IMR-90 (cell line): ENCODE measurements at regions of chr6 and their contacts with region 1.

Region 1: DNA sequence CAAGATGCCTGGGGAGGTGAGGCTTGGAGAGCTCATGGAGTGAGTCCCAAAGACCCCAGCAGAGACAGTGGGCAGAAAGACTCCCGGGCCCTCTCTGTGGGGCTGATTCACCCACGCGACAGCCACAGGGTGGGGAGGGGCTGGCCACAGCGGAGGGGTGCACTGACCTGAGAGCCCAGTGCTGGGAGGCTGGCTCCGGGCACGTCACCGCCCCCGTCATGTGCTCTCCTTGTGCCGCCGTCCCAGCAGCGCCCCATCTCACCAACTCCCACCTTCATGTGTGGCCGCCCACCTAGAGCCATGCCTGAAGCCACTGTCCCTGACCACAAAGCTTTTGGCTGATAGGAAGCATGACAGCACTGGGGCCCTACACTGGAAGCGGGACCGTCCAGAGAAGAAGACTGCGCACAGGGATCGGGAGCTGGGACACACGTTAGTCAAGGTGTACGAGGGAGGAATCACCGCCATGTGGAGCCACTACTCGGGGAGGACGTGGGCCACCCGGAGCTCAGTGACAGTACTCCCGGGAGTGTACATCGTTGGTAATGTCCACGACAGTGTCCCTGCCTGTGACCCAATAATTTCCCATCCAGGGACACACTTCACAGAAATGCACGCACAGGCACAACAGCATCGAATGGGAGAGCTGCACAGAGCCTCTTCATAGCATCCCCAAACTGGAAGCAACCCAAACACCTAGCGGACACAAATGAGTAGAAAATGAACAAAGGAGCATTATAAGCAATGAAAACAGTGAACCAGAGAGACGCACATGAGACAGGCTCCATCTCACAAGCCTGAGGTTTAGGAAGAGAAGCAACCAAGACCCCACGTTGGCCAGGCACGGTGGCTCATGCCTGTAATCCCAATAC is 28.4 kb upstream of the FOXC1 start:
- DNase-seq: no peak
- ATAC-seq: no peak
- H3K4me3 ChIP-seq: no peak overlapping the region
- H3K27ac ChIP-seq: no peak overlapping the region
- H3K4me1 ChIP-seq: no peaks in the 10 kb centered on the region
- H3K27me3 ChIP-seq: peaks cover 21% of the 10 kb centered on the region
- CTCF ChIP-seq: no peak
- POLR2A ChIP-seq: no peak
- RAD21 ChIP-seq: no peak

Region 2: DNA sequence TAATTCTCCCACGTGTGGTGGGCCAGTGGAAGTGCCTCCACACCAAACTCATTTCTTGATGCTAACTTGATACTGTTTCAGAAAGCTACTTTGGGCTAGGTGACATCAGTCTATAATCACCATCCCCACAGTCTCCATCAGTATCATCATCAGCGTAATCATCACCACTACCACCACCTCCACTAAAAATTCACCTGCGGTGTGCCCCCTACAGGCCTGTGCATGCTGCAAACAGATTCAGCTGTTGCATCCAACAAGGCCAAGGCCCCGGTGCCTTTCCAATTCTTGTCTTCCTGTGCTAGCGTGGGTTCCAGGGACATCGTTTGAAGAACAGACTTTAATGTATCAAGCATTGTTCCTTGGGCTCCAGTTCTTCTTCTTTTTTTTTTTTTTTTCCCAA is 687.1 kb before region 1 on chr6:
- CTCF ChIA-PET with region 1: no interaction called
- POLR2A ChIA-PET with region 1: no interaction called
- dilution Hi-C with region 1: no loop called
- in situ Hi-C with region 1: no loop called
- intact Hi-C with region 1: loop called (anchors 5 kb)
- DNase-seq: no peak
- ATAC-seq: no peak
- H3K4me3 ChIP-seq: no peak overlapping the region
- H3K27ac ChIP-seq: no peak overlapping the region
- H3K4me1 ChIP-seq: no peaks in the 10 kb centered on the region; the same call in 1 of the 2 replicates
- H3K27me3 ChIP-seq: peaks cover 14% of the 10 kb centered on the region
- CTCF ChIP-seq: no peak
- POLR2A ChIP-seq: no peak
- RAD21 ChIP-seq: no peak

Region 3: GRCh38 chr6:2158596-2159271 is 577.4 kb after region 1 on chr6:
- CTCF ChIA-PET with region 1: no interaction called
- POLR2A ChIA-PET with region 1: no interaction called
- dilution Hi-C with region 1: no loop called
- in situ Hi-C with region 1: no loop called
- intact Hi-C with region 1: no loop called
- DNase-seq: peak; percentile 12
- ATAC-seq: no peak
- H3K4me3 ChIP-seq: no peak overlapping the region
- H3K27ac ChIP-seq: peak overlapping the region; percentile 84; the same call in 1 of the 2 replicates
- H3K4me1 ChIP-seq: peaks cover 12% of the 10 kb centered on the region
- H3K27me3 ChIP-seq: no peaks in the 10 kb centered on the region
- CTCF ChIP-seq: peak; percentile 23; the same call in 1 of the 2 replicates
- POLR2A ChIP-seq: no peak
- RAD21 ChIP-seq: no peak